Activated CD8-positive, alpha-beta memory T cell treated with anti-CD3 and anti-CD28 coated beads, Interleukin-2, amount 10 ng/mL, durations not matched to agents 7 days and 5 days (primary cell): ENCODE measurements at regions of chr3 and their contacts with region 1.

Region 1: DNA sequence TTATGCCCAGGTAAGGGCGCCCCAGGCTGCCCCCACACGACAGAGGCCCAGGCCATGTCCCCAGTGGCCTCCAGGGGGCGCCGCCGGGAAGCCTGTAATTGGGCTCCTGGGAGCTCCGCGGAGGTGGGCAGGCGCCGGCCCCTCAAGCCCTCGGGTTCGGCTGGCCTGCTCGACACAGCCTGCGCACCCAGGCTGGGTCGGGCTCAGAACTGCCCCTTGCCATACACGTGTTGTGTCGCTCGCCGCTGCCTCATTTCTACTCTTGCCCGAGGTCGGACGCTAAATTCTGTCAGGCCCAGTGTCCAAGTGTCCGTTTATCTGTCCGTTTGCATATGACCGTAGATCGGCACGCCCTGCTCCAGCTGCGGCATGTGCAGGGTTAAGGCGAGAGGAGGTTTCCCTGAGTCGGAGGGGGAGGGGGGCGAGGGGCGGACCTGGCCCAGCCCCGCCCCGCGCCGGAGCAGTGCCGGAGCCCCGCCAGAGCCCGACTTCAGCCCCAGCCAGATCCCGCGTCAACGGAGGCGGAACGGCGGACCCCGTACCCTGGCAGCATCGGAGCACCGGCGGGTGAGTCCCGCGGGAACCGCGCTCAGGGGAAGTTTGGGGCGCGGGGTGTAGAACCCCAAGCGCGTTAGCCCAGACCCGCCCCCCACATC is at the start of gene KLHDC8B:
- DNase-seq: peak; percentile 88
- ATAC-seq: peak; percentile 90
- H3K4me3 Mint-ChIP-seq: peak within 1 kb of the TSS; percentile 79
- H3K27ac Mint-ChIP-seq: no peak within 1 kb of the TSS
- H3K4me1 Mint-ChIP-seq: peaks cover 22% of the 10 kb centered on the region
- H3K27me3 Mint-ChIP-seq: no peaks in the 10 kb centered on the region
- total RNA-seq, gene KLHDC8B: 0.80 to 1.3 TPM

Region 2: GRCh38 chr3:49081429-49081828 is 89.8 kb before region 1 on chr3:
- CTCF ChIA-PET with region 1: no interaction called
- DNase-seq: no peak
- ATAC-seq: no peak
- H3K4me3 Mint-ChIP-seq: no peak overlapping the region
- H3K27ac Mint-ChIP-seq: no peak overlapping the region
- H3K4me1 Mint-ChIP-seq: peaks cover 4% of the 10 kb centered on the region
- H3K27me3 Mint-ChIP-seq: no peaks in the 10 kb centered on the region

Region 3: DNA sequence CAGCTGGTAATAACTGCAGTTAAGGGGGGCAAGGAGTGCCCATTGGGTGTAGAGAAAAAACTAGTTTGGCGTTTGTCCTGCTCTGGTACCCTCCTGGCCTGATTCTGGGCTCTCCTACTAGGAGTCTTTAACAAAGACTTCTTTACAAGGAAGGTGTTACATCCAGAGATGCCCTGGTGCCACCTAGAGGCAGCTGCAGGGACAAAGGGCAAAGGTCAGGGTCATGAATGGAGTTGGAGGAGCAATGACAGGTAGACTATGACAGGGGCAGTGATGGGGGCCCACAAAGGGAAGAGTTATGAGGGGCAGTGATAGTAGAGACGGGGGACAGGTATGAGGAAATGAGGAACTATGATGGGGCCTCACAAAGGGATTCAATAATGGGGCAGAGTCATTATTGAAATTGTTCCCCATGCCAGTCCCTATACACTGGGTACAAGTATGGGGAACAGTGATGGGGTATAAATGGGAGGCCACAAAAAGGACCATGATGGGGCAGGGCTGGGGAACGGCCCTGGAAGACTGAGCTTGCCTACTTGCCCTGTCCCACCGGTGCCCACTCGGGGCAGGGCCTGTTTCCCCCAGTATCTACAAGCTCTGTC is 13.0 kb before region 1 on chr3:
- CTCF ChIA-PET with region 1: interaction called, 28 read pairs
- DNase-seq: peak; percentile 82
- ATAC-seq: peak; percentile 80
- H3K4me3 Mint-ChIP-seq: no peak overlapping the region
- H3K27ac Mint-ChIP-seq: no peak overlapping the region
- H3K4me1 Mint-ChIP-seq: peaks cover 20% of the 10 kb centered on the region
- H3K27me3 Mint-ChIP-seq: no peaks in the 10 kb centered on the region

Region 4: DNA sequence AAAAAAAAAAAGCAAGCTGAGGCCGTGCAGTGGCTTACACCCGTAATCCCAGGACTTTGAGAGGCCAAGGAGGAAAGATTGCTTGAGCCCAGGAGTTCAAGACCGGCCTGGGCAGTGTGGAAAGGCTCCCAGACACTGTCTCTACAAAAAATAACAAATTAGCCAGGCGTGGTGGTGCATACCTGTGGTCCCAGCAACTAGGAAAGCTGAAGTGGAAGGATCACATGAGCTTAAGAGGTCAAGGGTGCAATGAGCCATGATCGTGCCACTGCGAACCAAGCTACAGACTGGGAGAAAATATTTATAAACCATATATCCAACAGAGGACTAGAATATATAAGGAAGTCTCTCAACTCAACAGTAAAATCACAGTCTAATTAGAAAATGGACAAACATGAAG is 10.1 kb after region 1 on chr3:
- CTCF ChIA-PET with region 1: interaction called, 18 read pairs
- DNase-seq: no peak
- ATAC-seq: no peak
- H3K4me3 Mint-ChIP-seq: no peak overlapping the region
- H3K27ac Mint-ChIP-seq: no peak overlapping the region
- H3K4me1 Mint-ChIP-seq: no peaks in the 10 kb centered on the region
- H3K27me3 Mint-ChIP-seq: peaks cover 4% of the 10 kb centered on the region